ENCODE measurements at regions of chr14 and their contacts with region 1.

Region 1: DNA sequence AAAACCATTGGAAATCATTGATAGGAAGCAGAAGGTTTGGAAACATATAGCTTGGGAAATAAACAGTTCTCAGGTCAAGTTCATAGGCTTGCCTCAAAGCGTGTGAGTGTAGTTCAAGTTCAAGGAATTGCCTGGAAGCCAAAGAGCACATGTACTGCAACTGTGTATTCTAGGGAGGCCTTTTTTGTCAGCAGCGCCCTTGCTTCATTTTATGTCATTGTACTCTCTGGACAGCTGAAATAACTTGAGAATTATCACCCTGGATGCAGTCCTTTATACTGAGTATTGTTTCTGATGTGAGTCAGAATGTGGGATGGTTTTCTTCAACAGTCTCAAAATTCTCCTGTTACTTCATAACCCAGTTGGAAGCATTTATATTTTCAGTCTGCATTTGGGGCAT is 16.0 kb upstream of the EVL start:
- DNase-seq: no peak
- ATAC-seq: no peak
- H3K4me3 ChIP-seq: no peak overlapping the region
- H3K4me3 Mint-ChIP-seq: no peak overlapping the region
- H3K27ac ChIP-seq: no peak overlapping the region
- H3K27ac Mint-ChIP-seq: no peak overlapping the region
- H3K4me1 ChIP-seq: peaks cover 9% of the 10 kb centered on the region
- H3K4me1 Mint-ChIP-seq: peaks cover 10% of the 10 kb centered on the region
- H3K27me3 ChIP-seq: no peaks in the 10 kb centered on the region
- H3K27me3 Mint-ChIP-seq: no peaks in the 10 kb centered on the region
- CTCF ChIP-seq: no peak

Region 2: GRCh38 chr14:99995700-99996356 is 53.4 kb before region 1 on chr14:
- CTCF ChIA-PET with region 1: no interaction called
- POLR2A ChIA-PET with region 1: no interaction called
- intact Hi-C with region 1: loop called in 1 of 2 experiments (anchors 10 kb)
- DNase-seq: peak; percentile 33 to 80 (median 71)
- ATAC-seq: peak; percentile 98
- H3K4me3 ChIP-seq: no peak overlapping the region
- H3K4me3 Mint-ChIP-seq: no peak overlapping the region
- H3K27ac ChIP-seq: no peak overlapping the region
- H3K27ac Mint-ChIP-seq: no peak overlapping the region
- H3K4me1 ChIP-seq: no peaks in the 10 kb centered on the region
- H3K4me1 Mint-ChIP-seq: peaks cover 3% of the 10 kb centered on the region
- H3K27me3 ChIP-seq: no peaks in the 10 kb centered on the region
- H3K27me3 Mint-ChIP-seq: peaks cover 2% of the 10 kb centered on the region
- CTCF ChIP-seq: peak; percentile 86

Region 3: GRCh38 chr14:101294136-101294535 is 1244.9 kb after region 1 on chr14:
- CTCF ChIA-PET with region 1: no interaction called
- POLR2A ChIA-PET with region 1: no interaction called
- intact Hi-C with region 1: no loop called
- DNase-seq: no peak
- ATAC-seq: no peak
- H3K4me3 ChIP-seq: no peak overlapping the region
- H3K4me3 Mint-ChIP-seq: no peak overlapping the region
- H3K27ac ChIP-seq: no peak overlapping the region
- H3K27ac Mint-ChIP-seq: no peak overlapping the region
- H3K4me1 ChIP-seq: no peaks in the 10 kb centered on the region
- H3K4me1 Mint-ChIP-seq: no peaks in the 10 kb centered on the region
- H3K27me3 ChIP-seq: no peaks in the 10 kb centered on the region
- H3K27me3 Mint-ChIP-seq: peaks cover 42% of the 10 kb centered on the region
- CTCF ChIP-seq: no peak